Activated B cell treated with CpG ODN at 0.5 μM for 24 hours (primary cell): ENCODE measurements at regions of chr3 and their contacts with region 1.

Region 1: GRCh38 chr3:47108546-47108945 is 55.4 kb downstream of the SETD2 start:
- DNase-seq: no peak
- ATAC-seq: no peak
- H3K4me3 Mint-ChIP-seq: no peak overlapping the region
- H3K27ac Mint-ChIP-seq: no peak overlapping the region
- H3K4me1 Mint-ChIP-seq: peaks cover 6% of the 10 kb centered on the region
- H3K27me3 Mint-ChIP-seq: no peaks in the 10 kb centered on the region
- CTCF ChIP-seq: no peak

Region 2: DNA sequence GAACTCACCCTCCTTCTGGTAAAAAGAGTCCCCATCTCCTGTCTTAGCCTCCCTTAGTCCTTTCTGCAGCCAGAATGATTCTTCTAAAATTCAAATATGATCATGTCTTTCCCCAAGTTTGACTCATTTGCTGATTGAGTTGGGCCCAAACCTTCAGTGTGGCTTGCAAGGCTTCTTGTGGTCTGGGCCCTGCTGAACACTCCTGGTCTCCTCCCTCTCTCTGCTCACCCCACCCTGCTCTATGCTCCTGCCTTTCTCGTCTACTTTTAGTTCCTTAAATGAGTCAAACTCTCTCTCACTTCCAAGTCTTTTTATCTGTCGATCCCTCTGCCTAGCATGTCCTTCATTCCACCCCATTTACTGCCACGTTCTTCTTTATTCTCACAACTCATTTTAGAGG is 973.1 kb before region 1 on chr3:
- CTCF ChIA-PET with region 1: no interaction called
- POLR2A ChIA-PET with region 1: no interaction called
- intact Hi-C with region 1: loop called (anchors 5 kb)
- DNase-seq: no peak
- ATAC-seq: no peak
- H3K4me3 Mint-ChIP-seq: no peak overlapping the region
- H3K27ac Mint-ChIP-seq: no peak overlapping the region
- H3K4me1 Mint-ChIP-seq: no peaks in the 10 kb centered on the region
- H3K27me3 Mint-ChIP-seq: no peaks in the 10 kb centered on the region
- CTCF ChIP-seq: no peak